Testis (tissue), 5 donors: ENCODE measurements at regions of chr3 and their contacts with region 1.

Region 1: GRCh38 chr3:38346587-38347410 is at the start of gene XYLB:
- DNase-seq: peak; percentile 91
- H3K4me3 ChIP-seq: peak within 1 kb of the TSS; percentile 72 to 74
- H3K27ac ChIP-seq: peak within 1 kb of the TSS in 1 of 2 donors; percentile 43
- H3K4me1 ChIP-seq: peaks cover 7% of the 10 kb centered on the region
- H3K27me3 ChIP-seq: no peaks in the 10 kb centered on the region
- CTCF ChIP-seq: peak; percentile 83 to 91 (median 84)
- POLR2A ChIP-seq: no peak
- total RNA-seq, gene XYLB: 5.9 to 12.4 TPM

Region 2: GRCh38 chr3:37571270-37571669 is 775.5 kb before region 1 on chr3:
- intact Hi-C with region 1: no loop called
- DNase-seq: no peak
- H3K4me3 ChIP-seq: no peak overlapping the region
- H3K27ac ChIP-seq: no peak overlapping the region
- H3K4me1 ChIP-seq: no peaks in the 10 kb centered on the region
- H3K27me3 ChIP-seq: no peaks in the 10 kb centered on the region
- CTCF ChIP-seq: no peak
- POLR2A ChIP-seq: no peak

Region 3: DNA sequence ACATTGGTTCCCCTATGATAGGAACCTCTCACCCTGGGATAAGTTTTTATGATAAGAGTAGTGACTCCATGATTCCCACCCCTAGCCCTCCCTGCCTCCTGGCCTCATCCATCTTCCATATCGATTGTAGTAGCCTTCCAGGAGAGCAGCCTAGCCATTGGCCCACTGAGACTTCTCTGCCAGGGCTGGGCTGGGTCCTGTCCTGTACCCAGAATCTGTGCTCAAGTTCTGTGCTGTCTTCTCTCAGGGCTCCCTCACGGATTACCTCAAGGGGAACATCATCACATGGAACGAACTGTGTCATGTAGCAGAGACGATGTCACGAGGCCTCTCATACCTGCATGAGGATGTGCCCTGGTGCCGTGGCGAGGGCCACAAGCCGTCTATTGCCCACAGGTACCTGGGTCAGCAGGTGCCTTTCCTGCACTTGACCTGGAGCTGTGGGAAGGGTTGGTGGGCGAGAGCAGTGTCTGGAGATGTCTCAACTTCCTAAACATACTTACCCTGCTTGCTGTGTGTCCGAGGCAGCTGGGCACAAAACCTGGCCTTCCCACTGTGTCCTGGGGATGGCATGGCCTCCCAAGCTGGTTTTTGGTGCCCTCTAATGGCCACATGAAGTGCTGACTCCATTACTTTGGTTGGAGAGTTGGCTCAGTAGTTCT is 132.8 kb after region 1 on chr3:
- intact Hi-C with region 1: loop called (anchors 5 kb)
- DNase-seq: peak; percentile 77
- H3K4me3 ChIP-seq: no peak overlapping the region
- H3K27ac ChIP-seq: no peak overlapping the region
- H3K4me1 ChIP-seq: no peaks in the 10 kb centered on the region
- H3K27me3 ChIP-seq: no peaks in the 10 kb centered on the region
- CTCF ChIP-seq: peak; percentile 57 to 82 (median 74)
- POLR2A ChIP-seq: no peak